ENCODE measurements at regions of chr10 and their contacts with region 1.

Region 1: GRCh38 chr10:23158370-23158769 is 33.7 kb upstream of the PTF1A start:
- DNase-seq: peak; percentile 71 to 78
- ATAC-seq: peak; percentile 75 to 91; a peak in 5 of 6 replicates
- H3K4me3 ChIP-seq: peak overlapping the region; percentile 29; the same call in 1 of the 3 replicates
- H3K27ac ChIP-seq: no peak overlapping the region
- H3K4me1 ChIP-seq: peaks cover 3% of the 10 kb centered on the region; the same call in 1 of the 3 replicates
- CTCF ChIP-seq: peak; percentile 91
- EP300 ChIP-seq: no peak
- POLR2A ChIP-seq: no peak
- RAD21 ChIP-seq: peak; percentile 88 to 90

Region 2: DNA sequence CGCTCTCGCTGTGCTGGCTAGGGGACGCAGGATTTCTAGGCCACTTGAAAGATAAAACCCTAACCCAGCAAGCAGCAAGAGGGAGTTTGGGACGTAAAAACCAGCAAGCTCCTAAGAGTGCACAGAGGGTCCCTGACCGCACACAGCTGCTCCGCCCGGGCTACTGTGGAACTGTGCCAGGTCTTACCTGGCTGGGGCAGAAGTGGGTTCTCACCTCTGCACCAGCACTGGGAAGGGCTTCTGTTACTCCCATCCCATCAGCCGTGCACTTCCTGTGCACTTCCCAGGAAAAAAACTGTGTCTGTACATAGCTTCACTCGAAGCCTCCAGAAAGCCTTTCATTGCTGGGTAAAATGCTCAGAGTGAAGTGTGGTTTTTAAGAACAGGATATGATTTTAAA is 12.1 kb before region 1 on chr10:
- CTCF ChIA-PET with region 1: interaction called, 25 read pairs
- POLR2A ChIA-PET with region 1: no interaction called
- DNase-seq: no peak
- ATAC-seq: no peak; a peak in 1 of 6 replicates
- H3K4me3 ChIP-seq: no peak overlapping the region
- H3K27ac ChIP-seq: no peak overlapping the region
- H3K4me1 ChIP-seq: no peaks in the 10 kb centered on the region
- CTCF ChIP-seq: no peak
- EP300 ChIP-seq: no peak
- POLR2A ChIP-seq: no peak
- RAD21 ChIP-seq: no peak

Region 3: GRCh38 chr10:23171223-23171876 is 13.0 kb after region 1 on chr10:
- CTCF ChIA-PET with region 1: interaction called, 47 read pairs
- POLR2A ChIA-PET with region 1: no interaction called
- DNase-seq: peak in 1 of 2 experiments; percentile 14
- ATAC-seq: peak in 1 of 2 experiments; percentile 70; a peak in 2 of 6 replicates
- H3K4me3 ChIP-seq: no peak overlapping the region
- H3K27ac ChIP-seq: no peak overlapping the region
- H3K4me1 ChIP-seq: no peaks in the 10 kb centered on the region
- CTCF ChIP-seq: no peak
- EP300 ChIP-seq: no peak
- POLR2A ChIP-seq: no peak
- RAD21 ChIP-seq: no peak

Region 4: GRCh38 chr10:23293145-23293724 is 134.9 kb after region 1 on chr10:
- CTCF ChIA-PET with region 1: interaction called, 78 read pairs
- POLR2A ChIA-PET with region 1: no interaction called
- DNase-seq: peak; percentile 10 to 44
- ATAC-seq: peak; percentile 77 to 86; a peak in 4 of 6 replicates
- H3K4me3 ChIP-seq: no peak overlapping the region
- H3K27ac ChIP-seq: no peak overlapping the region
- H3K4me1 ChIP-seq: no peaks in the 10 kb centered on the region
- CTCF ChIP-seq: peak; percentile 54
- EP300 ChIP-seq: no peak
- POLR2A ChIP-seq: no peak
- RAD21 ChIP-seq: peak; percentile 47 to 63; a peak in 4 of 5 replicates

Region 5: GRCh38 chr10:23525406-23525805 is 367.0 kb after region 1 on chr10:
- CTCF ChIA-PET with region 1: interaction called, 39 read pairs
- POLR2A ChIA-PET with region 1: no interaction called
- DNase-seq: peak; percentile 4 to 34
- ATAC-seq: peak; percentile 56 to 77; a peak in 4 of 6 replicates
- H3K4me3 ChIP-seq: no peak overlapping the region
- H3K27ac ChIP-seq: no peak overlapping the region
- H3K4me1 ChIP-seq: no peaks in the 10 kb centered on the region
- CTCF ChIP-seq: peak; percentile 44; the same call in 2 of the 3 replicates
- EP300 ChIP-seq: no peak
- POLR2A ChIP-seq: no peak
- RAD21 ChIP-seq: peak; percentile 61 to 69

Region 6: GRCh38 chr10:24197263-24197662 is 1038.9 kb after region 1 on chr10:
- CTCF ChIA-PET with region 1: interaction called, 11 read pairs
- POLR2A ChIA-PET with region 1: no interaction called
- DNase-seq: no peak
- ATAC-seq: no peak
- H3K4me3 ChIP-seq: no peak overlapping the region
- H3K27ac ChIP-seq: no peak overlapping the region
- H3K4me1 ChIP-seq: no peaks in the 10 kb centered on the region
- CTCF ChIP-seq: no peak
- EP300 ChIP-seq: no peak
- POLR2A ChIP-seq: no peak
- RAD21 ChIP-seq: no peak